AG04449 (cell line): ENCODE measurements at regions of chr10 and their contacts with region 1.

Region 1: DNA sequence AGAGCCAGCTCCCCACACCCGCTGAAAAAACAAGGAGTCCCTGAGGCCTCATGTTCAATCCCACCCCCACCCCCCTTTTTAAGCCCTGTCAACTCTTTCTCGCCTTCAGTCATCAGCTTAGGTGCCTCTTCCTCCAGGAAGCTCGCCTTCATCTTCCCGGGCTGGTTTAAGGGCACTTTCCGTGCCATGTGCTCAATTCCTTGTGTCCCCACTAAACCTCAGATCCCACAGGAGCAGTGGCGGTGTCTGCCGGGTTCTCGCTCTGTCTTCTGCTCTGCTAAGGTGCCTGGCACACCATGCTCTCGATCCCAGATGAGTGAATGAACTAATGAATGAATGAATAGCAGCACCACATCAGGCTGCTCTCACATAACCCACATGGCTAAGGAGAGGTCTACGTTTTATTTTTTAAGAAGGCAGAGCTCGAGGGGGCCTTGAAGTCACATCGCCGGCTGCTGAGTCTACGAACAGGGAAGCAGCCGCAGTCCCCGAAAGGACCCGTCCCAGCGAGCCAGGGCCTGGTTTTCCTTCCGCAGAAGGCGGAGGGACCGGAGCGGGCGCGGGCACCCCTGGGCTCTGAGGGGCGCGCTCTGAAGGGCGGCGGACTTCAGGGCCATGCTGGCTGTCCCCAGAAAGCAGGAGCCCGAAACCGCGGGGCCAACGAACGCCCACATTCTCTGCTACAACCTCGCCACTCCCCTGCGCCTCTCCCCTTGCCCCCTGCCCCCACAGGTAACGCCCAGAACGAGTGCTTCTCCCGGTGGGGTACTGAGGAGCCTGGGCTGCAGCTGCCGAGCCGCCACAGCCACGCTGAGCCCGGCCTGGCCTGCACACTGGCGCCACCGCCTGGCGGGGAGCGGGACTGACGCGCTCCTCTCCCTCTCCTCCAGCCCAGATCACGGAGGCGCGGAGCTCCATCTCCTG is 73.4 kb upstream of the KCNMA1 start:
- DNase-seq: no peak
- H3K4me3 ChIP-seq: peak overlapping the region; percentile 52
- CTCF ChIP-seq: peak; percentile 100

Region 2: GRCh38 chr10:75932921-75933320 is 1778.1 kb before region 1 on chr10:
- CTCF ChIA-PET with region 1: no interaction called
- POLR2A ChIA-PET with region 1: no interaction called
- DNase-seq: no peak
- H3K4me3 ChIP-seq: no peak overlapping the region
- CTCF ChIP-seq: no peak

Region 3: DNA sequence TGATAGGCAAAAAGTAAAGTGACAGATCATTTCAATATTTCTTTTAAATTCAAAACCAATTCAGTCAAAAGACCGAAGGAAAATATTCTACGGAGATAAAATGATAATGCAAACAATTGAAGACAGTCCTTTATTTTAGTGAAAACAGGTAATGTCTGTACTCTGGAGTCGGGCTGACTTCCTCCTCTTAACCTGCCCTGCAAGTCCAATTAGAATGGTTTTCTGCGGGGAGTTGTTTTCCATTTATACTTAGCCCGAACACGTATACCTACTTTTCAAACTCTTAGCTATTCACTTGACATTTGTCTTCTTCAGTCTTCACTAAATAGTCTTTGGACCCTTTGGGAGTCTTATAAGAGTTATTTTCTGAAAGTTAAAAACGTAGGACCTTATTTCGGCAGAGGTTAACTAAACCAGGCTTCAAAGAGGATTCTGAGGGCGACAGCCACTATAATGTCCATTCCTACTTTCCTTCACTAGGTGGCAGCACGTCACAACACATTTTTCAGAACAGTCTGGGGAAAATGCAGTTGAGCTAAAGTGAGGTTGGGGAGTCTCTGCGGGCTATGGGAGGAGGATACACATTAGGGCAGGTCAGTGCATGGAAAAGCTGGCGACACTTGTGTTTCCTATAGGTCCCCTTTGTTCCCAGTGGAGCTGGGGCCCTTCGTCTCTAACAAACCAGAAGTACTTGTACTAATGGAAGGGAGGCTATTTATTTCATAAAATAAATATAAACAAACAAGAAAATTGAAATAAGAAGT is 545.4 kb before region 1 on chr10:
- CTCF ChIA-PET with region 1: interaction called, 92 read pairs
- POLR2A ChIA-PET with region 1: no interaction called
- DNase-seq: no peak
- H3K4me3 ChIP-seq: no peak overlapping the region
- CTCF ChIP-seq: peak; percentile 73

Region 4: GRCh38 chr10:77649333-77650331 is 61.4 kb before region 1 on chr10:
- CTCF ChIA-PET with region 1: interaction called, 10 read pairs
- POLR2A ChIA-PET with region 1: no interaction called
- DNase-seq: no peak
- H3K4me3 ChIP-seq: no peak overlapping the region
- CTCF ChIP-seq: no peak

Region 5: GRCh38 chr10:77685432-77685831 is 25.6 kb before region 1 on chr10:
- CTCF ChIA-PET with region 1: interaction called, 22 read pairs
- POLR2A ChIA-PET with region 1: no interaction called
- DNase-seq: no peak
- H3K4me3 ChIP-seq: no peak overlapping the region
- CTCF ChIP-seq: no peak

Region 6: GRCh38 chr10:77721815-77722214 is 10.8 kb after region 1 on chr10:
- CTCF ChIA-PET with region 1: interaction called, 44 read pairs
- POLR2A ChIA-PET with region 1: no interaction called
- DNase-seq: no peak
- H3K4me3 ChIP-seq: no peak overlapping the region
- CTCF ChIP-seq: no peak

Region 7: DNA sequence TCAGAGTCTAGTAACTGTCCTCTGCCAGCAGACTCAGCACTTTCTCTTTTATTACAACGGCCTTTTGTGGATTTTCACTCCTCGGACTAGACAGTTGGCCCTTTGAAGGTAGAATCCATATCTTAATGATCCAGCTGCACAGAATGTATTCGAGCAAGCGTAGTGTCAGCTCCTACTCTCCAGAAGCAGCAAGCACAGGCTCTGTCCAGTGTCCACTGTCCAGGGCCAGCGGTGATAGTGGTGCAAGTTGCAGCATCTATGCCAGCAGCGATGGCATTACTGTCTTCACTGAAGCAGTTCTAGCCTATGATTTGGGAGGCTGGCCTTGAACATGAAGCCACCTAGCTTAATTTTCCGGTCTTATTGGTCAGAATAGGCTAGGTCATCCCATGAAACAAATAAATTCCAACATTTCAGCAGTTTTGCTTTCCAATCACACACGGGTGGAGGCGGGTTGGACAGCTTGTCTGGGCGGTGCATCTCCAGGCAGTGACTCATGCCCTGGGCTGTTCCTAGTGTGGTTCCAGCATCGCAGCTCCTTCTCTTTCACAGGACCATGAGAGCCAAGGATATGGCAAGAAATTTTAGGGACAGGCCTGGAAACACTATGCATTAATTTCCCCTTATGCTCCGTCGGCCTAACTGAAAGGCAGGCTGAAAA is 35.2 kb after region 1 on chr10:
- CTCF ChIA-PET with region 1: interaction called, 14 read pairs
- POLR2A ChIA-PET with region 1: no interaction called
- DNase-seq: no peak
- H3K4me3 ChIP-seq: no peak overlapping the region
- CTCF ChIP-seq: no peak

Region 8: DNA sequence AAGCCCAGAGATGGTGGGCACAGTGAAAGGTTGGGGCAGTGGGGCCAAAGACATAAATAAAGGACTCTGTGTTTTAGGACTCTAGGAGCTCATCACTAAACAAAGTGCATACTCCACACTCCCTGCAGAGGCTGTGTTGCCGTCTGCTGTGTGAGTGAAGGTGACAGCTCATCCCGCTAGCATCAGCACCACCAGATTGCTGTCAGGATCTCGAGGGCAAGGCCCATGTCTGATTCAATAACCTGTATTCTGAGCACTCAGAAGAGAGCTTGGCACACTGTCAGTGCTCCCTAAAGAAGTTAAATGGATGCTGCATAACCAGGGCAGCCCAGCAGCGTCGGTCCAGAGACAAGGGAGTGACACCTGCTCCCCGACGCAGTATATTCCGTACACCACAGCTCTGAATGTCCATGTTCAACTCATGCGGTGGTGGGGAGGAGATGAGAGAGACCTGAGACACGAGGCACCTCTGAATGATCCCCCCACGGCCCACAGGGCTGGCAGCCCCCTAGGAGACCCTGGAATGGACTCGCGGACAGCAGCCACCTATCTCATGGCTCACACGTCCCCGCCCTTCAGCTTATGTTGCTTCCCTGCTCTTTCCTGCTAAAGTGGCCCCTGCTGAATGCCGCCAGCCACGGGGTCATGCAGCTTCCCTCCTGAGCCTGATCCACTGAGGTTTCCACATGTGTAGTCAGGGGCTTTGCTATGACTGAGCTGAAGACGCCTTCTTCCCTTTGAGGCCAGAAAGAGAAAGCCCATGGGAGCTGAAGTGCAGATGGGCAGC is 59.3 kb after region 1 on chr10:
- CTCF ChIA-PET with region 1: interaction called, 13 read pairs
- POLR2A ChIA-PET with region 1: no interaction called
- DNase-seq: no peak
- H3K4me3 ChIP-seq: no peak overlapping the region
- CTCF ChIP-seq: no peak